Transverse colon (tissue), 4 donors: ENCODE measurements at regions of chr7 and their contacts with region 1.

Region 1: DNA sequence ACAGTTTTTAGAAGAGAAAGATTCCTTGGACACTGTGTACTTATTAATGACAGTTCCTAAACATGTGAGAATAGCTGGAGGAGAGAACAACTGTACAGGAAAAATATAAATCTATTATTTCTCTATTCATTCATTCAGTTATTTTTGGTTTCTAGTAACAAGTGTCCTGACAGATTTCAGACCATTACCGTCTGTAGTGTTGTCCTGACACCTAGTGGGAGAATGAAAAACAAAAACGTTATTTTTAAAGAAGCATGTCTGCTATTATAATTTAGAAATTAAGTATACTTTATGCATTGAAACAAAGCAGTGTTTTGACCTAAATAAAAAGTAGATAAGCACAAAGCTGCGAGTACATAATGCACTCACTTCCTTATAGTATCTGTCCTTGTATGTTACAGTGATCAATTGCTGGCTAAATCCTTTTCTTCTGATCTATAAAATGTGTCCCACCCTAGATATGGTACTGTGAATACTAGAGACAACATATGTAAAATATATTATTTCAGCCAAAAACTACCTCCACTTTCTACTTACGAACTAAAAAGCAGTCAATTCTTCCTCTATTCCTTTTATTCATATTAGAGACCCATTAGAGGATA is 575.6 kb downstream of the ARL4A start:
- DNase-seq: no peak
- H3K4me3 ChIP-seq: no peak overlapping the region
- H3K27ac ChIP-seq: no peak overlapping the region
- H3K4me1 ChIP-seq: no peaks in the 10 kb centered on the region
- H3K27me3 ChIP-seq: no peaks in the 10 kb centered on the region
- CTCF ChIP-seq: peak; percentile 50 to 62 (median 58)
- EP300 ChIP-seq: no peak
- POLR2A ChIP-seq: no peak

Region 2: DNA sequence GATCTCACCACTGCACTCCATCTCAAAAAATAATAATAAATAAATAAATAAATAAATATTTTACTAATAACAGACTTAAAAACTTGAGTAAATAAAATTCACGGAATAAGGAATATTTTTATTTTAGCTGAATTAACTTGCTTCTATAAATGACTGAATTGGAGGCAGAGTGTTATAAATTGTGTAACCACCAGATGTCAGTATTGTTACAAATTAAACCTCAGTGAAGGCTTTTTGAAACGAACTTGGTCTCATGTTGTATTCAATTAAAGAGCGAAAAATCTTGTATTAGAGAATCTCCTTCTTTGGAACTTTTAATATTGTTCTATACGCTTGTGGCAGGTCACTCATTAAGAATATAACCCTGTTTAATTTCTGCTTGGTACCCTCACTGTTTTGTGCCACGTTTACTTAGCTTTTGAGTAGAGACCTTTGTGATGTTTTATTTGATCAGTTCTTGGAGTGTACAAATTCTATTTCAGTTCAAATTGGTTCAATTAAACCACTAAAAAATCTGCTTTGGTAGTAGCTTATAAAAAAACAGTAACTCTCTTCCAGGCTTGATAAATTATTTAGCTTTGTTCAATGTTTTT is 738.1 kb before region 1 on chr7:
- in situ Hi-C with region 1: loop called (anchors 10 to 25 kb)
- intact Hi-C with region 1: no loop called
- DNase-seq: no peak
- H3K4me3 ChIP-seq: no peak overlapping the region
- H3K27ac ChIP-seq: no peak overlapping the region
- H3K4me1 ChIP-seq: no peaks in the 10 kb centered on the region
- H3K27me3 ChIP-seq: no peaks in the 10 kb centered on the region
- CTCF ChIP-seq: peak; percentile 63 to 71 (median 67)
- EP300 ChIP-seq: no peak
- POLR2A ChIP-seq: no peak

Region 3: DNA sequence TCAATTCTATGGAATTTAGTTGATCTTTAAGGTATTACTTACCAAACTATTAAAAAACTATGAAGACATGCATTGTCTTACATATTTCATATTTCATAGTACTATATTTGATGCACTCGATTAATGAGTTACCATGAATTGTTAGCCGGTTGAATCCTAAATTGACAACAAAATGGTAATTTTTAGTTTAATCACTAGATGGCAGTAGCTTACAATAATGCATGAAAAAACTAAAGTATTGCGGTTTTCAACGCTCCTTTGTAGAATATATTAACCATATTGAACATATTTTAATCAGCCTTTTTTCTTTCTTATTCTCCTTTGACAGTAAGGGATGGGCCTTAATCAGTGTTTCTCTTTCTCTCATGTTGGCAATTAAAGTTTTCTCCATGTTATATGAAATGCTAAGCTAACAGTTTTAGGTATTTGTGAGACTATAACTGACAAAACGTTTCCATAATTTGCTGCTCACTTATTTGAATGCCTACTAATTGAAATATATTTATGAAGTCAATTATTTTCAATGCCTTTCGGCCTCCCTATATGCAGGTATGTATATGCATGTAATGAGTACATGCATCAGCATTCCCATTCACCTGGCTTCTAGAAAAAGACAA is 624.1 kb before region 1 on chr7:
- in situ Hi-C with region 1: loop called (anchors 10 to 25 kb)
- intact Hi-C with region 1: loop called (anchors 5 kb)
- DNase-seq: no peak
- H3K4me3 ChIP-seq: no peak overlapping the region
- H3K27ac ChIP-seq: no peak overlapping the region
- H3K4me1 ChIP-seq: peaks cover 0 to 13% (median 7%) of the 10 kb centered on the region in 4 donors
- H3K27me3 ChIP-seq: no peaks in the 10 kb centered on the region
- CTCF ChIP-seq: peak; percentile 48 to 67 (median 62)
- EP300 ChIP-seq: no peak
- POLR2A ChIP-seq: no peak

Region 4: GRCh38 chr7:12647364-12648219 is 615.4 kb before region 1 on chr7:
- in situ Hi-C with region 1: loop called in 3 of 4 experiments (anchors 10 to 25 kb)
- intact Hi-C with region 1: no loop called
- DNase-seq: peak; percentile 18
- H3K4me3 ChIP-seq: no peak overlapping the region
- H3K27ac ChIP-seq: no peak overlapping the region
- H3K4me1 ChIP-seq: peaks cover 0 to 5% (median 1%) of the 10 kb centered on the region in 4 donors
- H3K27me3 ChIP-seq: no peaks in the 10 kb centered on the region
- CTCF ChIP-seq: no peak
- EP300 ChIP-seq: no peak
- POLR2A ChIP-seq: no peak

Region 5: DNA sequence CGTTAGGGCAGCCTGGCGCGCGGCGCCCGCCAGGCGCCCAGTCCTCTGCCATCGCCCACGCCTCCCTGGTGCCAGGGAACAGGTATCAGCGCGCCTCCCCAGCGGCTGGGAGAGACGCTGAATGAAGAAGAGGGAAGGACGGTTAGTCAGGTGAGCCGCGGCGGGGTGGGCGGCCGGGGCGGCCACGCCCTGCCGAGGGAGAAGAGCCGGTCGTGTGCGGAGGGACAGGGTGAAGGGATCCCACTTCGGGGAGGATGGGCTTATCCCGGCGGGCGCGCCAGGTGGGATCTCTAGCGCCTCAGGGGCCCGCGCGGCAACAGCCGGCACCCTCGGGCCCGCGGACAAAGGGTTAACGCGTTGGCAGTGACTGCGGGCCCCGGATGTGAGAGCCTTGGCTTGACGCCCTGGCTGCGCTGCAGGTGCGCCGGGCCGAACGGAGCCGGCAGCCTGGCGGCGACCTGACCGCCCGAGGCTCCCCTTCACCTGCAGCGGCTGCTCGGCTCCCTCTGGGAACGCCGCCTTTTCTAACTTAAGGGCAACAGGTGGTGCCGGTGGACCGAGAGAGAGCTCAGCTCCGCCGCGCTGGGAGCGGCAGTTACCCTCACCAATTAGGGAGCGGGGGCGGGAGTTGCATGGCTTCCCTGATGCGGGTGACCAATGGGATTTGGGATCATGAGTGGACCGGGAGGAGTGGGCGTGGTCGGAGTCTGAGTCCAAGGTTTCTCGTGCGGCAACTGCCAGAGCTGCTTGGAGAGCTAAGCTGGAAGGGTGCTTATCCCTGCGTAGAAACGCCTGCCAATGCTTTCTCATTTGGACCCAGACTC is 575.9 kb before region 1 on chr7 and contains the start of gene ARL4A:
- in situ Hi-C with region 1: loop called in 2 of 4 experiments (anchors 10 kb)
- intact Hi-C with region 1: no loop called
- DNase-seq: peak; percentile 99
- H3K4me3 ChIP-seq: peak within 1 kb of the TSS; percentile 72 to 93 (median 90)
- H3K27ac ChIP-seq: peak within 1 kb of the TSS; percentile 95 to 99 (median 96)
- H3K4me1 ChIP-seq: peaks cover 0 to 28% (median 10%) of the 10 kb centered on the region in 4 donors
- H3K27me3 ChIP-seq: no peaks in the 10 kb centered on the region
- CTCF ChIP-seq: peak in 4 of 5 experiments; percentile 14 to 37 (median 28)
- EP300 ChIP-seq: no peak
- POLR2A ChIP-seq: peak; percentile 99
- total RNA-seq, gene ARL4A: 10.5 to 135 (median 74.9) TPM

Region 6: DNA sequence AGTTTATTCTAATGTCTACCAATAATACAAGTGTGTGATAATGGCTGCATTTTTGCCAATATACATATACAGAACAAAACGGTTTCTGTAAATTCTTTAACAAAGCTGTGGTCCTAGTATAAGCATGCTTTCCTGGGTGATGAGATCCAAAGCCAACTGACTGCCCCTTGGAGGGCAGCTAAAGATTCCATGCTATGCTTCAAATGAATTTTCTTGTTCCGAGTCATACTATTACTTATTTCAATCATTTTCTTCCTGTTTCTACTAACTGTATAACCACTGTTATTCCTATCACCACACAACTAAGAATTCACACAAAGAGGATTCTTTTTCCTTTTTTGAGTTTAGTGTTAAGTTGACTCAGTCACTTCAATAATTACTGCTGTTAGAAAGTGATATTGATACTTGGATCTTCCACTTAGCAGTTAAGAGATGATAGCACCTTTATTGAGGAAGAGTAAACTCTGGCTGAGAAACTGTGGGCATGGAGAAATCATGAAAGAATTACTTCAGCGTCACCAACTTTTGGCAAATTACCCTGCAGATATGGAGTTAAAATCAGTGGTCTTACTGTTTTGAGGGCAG is 378.1 kb before region 1 on chr7:
- in situ Hi-C with region 1: no loop called
- intact Hi-C with region 1: no loop called
- DNase-seq: no peak
- H3K4me3 ChIP-seq: no peak overlapping the region
- H3K27ac ChIP-seq: no peak overlapping the region
- H3K4me1 ChIP-seq: peaks cover 0 to 3% (median 0%) of the 10 kb centered on the region in 4 donors
- H3K27me3 ChIP-seq: no peaks in the 10 kb centered on the region
- CTCF ChIP-seq: no peak
- EP300 ChIP-seq: no peak
- POLR2A ChIP-seq: no peak

Region 7: DNA sequence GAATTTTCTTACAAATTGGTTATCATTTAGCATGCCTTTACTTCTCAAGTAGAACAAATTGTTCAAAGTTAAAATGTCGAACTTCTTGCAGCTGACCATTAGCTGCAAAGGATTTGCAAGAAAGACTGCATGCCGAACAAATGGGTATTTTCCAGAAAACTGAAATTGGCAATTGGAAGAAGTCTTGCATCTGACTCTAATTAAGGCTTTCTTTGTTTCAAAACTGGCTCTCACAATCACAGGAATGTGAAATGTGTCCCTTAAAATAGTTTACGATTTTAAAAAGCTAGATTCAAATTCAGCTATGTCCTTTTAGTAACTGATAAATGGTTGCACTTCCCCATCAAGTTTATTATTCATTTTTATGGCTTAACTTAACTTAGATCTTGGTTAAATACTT is 367.7 kb before region 1 on chr7:
- in situ Hi-C with region 1: no loop called
- intact Hi-C with region 1: no loop called
- DNase-seq: no peak
- H3K4me3 ChIP-seq: no peak overlapping the region
- H3K27ac ChIP-seq: no peak overlapping the region
- H3K4me1 ChIP-seq: no peaks in the 10 kb centered on the region
- H3K27me3 ChIP-seq: no peaks in the 10 kb centered on the region
- CTCF ChIP-seq: no peak
- EP300 ChIP-seq: no peak
- POLR2A ChIP-seq: no peak